B cell (primary cell): ENCODE measurements at regions of chr12 and their contacts with region 1.

Region 1: DNA sequence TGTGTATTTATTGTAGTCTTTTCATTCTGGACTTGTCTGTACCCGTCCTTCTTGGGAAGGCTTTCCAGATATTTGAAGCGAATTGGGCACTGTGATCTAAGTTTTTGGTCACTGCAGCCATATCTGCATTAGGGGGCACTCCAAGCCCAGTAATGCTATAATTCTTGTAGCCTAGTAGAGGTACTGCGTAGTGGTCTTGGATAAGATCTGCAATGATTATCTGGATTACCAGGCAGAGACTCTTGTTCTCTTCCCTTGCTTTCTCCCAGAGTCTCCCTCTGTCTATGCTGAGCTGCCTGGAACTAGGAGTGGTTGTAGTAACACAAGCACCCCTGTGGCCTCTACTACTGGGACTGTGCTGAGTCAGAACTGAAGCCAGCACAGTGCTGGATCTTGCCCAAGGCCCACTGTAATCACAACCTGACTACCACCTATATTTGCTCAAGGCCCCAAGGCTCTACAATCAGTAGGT is 30.0 kb downstream of the SLC38A2 start:
- DNase-seq: peak; percentile 65
- ATAC-seq: no peak
- H3K4me3 ChIP-seq: no peak overlapping the region
- H3K4me3 Mint-ChIP-seq: no peak overlapping the region
- H3K27ac ChIP-seq: no peak overlapping the region
- H3K27ac Mint-ChIP-seq: no peak overlapping the region
- H3K4me1 ChIP-seq: no peaks in the 10 kb centered on the region
- H3K4me1 Mint-ChIP-seq: no peaks in the 10 kb centered on the region
- H3K27me3 ChIP-seq: no peaks in the 10 kb centered on the region
- H3K27me3 Mint-ChIP-seq: peaks cover 8% of the 10 kb centered on the region
- CTCF ChIP-seq: peak; percentile 66

Region 2: GRCh38 chr12:46354111-46354798 is 11.7 kb after region 1 on chr12:
- CTCF ChIA-PET with region 1: no interaction called
- POLR2A ChIA-PET with region 1: no interaction called
- intact Hi-C with region 1: no loop called
- DNase-seq: no peak
- ATAC-seq: peak; percentile 43
- H3K4me3 ChIP-seq: no peak overlapping the region
- H3K4me3 Mint-ChIP-seq: no peak overlapping the region
- H3K27ac ChIP-seq: no peak overlapping the region
- H3K27ac Mint-ChIP-seq: no peak overlapping the region
- H3K4me1 ChIP-seq: no peaks in the 10 kb centered on the region
- H3K4me1 Mint-ChIP-seq: peaks cover 3% of the 10 kb centered on the region
- H3K27me3 ChIP-seq: peaks cover 0 to 4% (median 0%) of the 10 kb centered on the region in 4 experiments
- H3K27me3 Mint-ChIP-seq: no peaks in the 10 kb centered on the region
- CTCF ChIP-seq: no peak

Region 3: GRCh38 chr12:46391630-46392029 is 49.0 kb after region 1 on chr12:
- CTCF ChIA-PET with region 1: no interaction called
- POLR2A ChIA-PET with region 1: no interaction called
- intact Hi-C with region 1: no loop called
- DNase-seq: no peak
- ATAC-seq: no peak
- H3K4me3 ChIP-seq: no peak overlapping the region
- H3K4me3 Mint-ChIP-seq: no peak overlapping the region
- H3K27ac ChIP-seq: no peak overlapping the region
- H3K27ac Mint-ChIP-seq: no peak overlapping the region
- H3K4me1 ChIP-seq: peaks cover 42 to 43% of the 10 kb centered on the region in 2 donors
- H3K4me1 Mint-ChIP-seq: peaks cover 50% of the 10 kb centered on the region
- H3K27me3 ChIP-seq: no peaks in the 10 kb centered on the region
- H3K27me3 Mint-ChIP-seq: no peaks in the 10 kb centered on the region
- CTCF ChIP-seq: no peak

Region 4: DNA sequence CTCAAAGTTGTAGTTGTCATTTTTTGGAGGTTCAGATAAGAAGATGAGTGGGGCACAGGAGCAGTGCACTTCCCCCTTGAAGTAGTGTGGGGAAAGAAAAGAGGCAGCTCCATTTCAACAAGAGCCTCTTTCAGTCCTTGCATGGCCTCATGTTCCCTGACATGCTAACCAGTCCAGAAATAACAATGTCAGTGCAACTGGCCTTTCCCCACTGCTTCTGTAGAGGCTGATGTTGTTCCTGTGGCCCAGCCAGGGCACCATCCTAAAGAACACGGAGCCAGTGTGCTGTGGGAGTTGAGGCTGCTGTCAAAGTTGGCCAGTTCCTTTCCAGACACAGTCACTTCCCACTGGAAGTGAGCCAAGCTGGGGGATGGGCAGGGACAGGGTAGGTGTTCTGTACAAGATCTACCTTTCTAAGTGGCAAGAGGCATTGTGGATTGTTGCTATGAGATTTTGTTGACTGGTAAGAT is 107.7 kb after region 1 on chr12:
- CTCF ChIA-PET with region 1: no interaction called
- POLR2A ChIA-PET with region 1: no interaction called
- intact Hi-C with region 1: no loop called
- DNase-seq: no peak
- ATAC-seq: no peak
- H3K4me3 ChIP-seq: no peak overlapping the region
- H3K4me3 Mint-ChIP-seq: no peak overlapping the region
- H3K27ac ChIP-seq: no peak overlapping the region
- H3K27ac Mint-ChIP-seq: no peak overlapping the region
- H3K4me1 ChIP-seq: peaks cover 6 to 14% of the 10 kb centered on the region in 2 donors
- H3K4me1 Mint-ChIP-seq: peaks cover 15% of the 10 kb centered on the region
- H3K27me3 ChIP-seq: no peaks in the 10 kb centered on the region
- H3K27me3 Mint-ChIP-seq: no peaks in the 10 kb centered on the region
- CTCF ChIP-seq: no peak

Region 5: DNA sequence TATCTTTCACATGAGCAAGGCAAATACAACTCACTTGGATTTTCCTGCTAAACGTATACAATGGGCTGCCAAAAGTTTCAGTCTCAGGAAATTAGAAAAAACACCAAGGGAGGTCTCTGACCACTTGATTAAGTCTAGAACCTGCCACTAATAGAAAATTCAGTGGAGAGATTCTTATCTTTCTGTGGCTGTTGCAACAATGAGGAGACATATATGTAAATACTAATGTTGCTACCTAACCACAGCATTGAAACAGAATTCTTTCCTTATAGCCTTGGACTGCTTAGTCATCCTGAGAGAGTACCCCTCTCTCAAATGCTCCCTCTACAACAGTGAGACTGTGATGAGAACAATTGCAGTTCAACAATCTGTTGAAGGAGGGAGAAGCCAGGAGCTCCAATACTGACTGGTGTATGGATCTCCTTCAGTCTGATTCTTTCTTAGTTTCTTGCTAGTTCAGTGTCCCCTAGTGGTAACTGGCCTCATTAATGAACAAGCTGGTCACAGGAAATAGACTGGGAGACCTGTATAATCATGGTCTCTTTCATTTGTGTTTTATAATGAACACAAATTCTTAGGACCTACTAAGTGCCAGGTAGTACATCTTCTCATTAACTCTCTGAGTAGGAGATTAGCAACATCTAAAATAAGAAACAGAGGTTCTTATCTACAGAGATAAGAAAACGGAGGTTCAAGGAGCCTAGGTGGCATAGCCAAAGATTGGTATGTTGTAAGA is 318.7 kb after region 1 on chr12:
- CTCF ChIA-PET with region 1: interaction called, 20 read pairs
- POLR2A ChIA-PET with region 1: no interaction called
- intact Hi-C with region 1: loop called (anchors 1 kb)
- DNase-seq: peak; percentile 70
- ATAC-seq: peak; percentile 88
- H3K4me3 ChIP-seq: peak overlapping the region in 3 of 5 experiments; percentile 1 to 16 (median 7)
- H3K4me3 Mint-ChIP-seq: peak overlapping the region; percentile 29
- H3K27ac ChIP-seq: no peak overlapping the region
- H3K27ac Mint-ChIP-seq: peak overlapping the region; percentile 64
- H3K4me1 ChIP-seq: peaks cover 21 to 27% of the 10 kb centered on the region in 2 donors
- H3K4me1 Mint-ChIP-seq: peaks cover 28% of the 10 kb centered on the region
- H3K27me3 ChIP-seq: no peaks in the 10 kb centered on the region
- H3K27me3 Mint-ChIP-seq: no peaks in the 10 kb centered on the region
- CTCF ChIP-seq: peak; percentile 70

Region 6: DNA sequence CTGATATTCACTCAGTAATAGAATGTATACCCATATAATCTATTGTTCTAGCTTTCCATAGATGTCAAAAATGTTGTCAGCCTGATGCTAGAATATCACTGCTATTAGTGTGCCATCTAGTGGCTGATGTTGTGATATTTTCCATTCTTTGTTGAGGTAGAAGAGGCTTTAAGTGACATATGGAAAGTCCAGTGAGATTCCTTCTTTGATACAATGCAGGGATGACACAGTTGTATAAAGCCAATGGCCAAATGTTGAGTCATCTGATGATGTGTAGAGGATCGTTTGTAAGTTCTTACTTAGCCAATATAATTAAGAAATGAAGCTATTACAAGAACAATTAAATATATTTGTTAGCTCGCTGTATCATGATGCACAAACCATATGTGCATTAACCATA is 678.7 kb after region 1 on chr12:
- CTCF ChIA-PET with region 1: interaction called, 44 read pairs
- POLR2A ChIA-PET with region 1: no interaction called
- intact Hi-C with region 1: no loop called
- DNase-seq: peak; percentile 70
- ATAC-seq: peak; percentile 28
- H3K4me3 ChIP-seq: no peak overlapping the region
- H3K4me3 Mint-ChIP-seq: no peak overlapping the region
- H3K27ac ChIP-seq: no peak overlapping the region
- H3K27ac Mint-ChIP-seq: no peak overlapping the region
- H3K4me1 ChIP-seq: no peaks in the 10 kb centered on the region
- H3K4me1 Mint-ChIP-seq: no peaks in the 10 kb centered on the region
- H3K27me3 ChIP-seq: peaks cover 0 to 3% (median under 1%) of the 10 kb centered on the region in 4 experiments
- H3K27me3 Mint-ChIP-seq: peaks cover 9% of the 10 kb centered on the region
- CTCF ChIP-seq: peak; percentile 88

Region 7: DNA sequence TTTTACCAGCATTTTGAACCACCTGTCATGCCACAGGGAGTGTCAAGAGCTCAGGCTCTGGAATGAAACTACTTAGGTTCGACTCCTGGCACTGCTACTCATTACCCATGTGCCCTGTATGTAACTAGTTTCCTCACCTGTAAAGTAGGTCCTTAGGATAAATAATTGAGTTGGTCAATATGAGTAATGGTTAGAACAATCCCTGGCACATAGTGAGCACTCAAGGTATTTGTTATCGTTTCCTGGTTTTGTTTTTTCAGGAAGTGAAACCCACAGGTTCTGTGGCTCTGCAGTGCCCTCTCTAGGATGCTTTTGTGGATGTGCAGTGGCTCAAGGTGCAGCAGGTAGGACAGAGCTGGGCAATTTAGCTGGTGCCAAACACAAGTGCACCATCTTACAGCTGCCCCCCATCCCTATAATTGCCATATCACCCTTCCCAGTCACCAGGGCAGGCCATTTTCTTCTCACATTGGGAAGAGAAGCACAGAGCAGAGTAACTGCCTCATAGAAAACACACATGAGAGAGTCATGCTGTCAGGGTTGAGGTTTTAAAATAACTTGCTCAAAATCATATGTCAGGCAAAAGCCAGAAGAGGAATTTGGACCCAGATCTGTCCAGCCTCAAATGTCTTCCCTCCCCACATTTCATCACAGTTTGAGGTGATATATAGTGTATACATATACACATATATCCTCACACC is 1065.7 kb after region 1 on chr12:
- CTCF ChIA-PET with region 1: no interaction called
- POLR2A ChIA-PET with region 1: no interaction called
- intact Hi-C with region 1: loop called (anchors 1 kb)
- DNase-seq: peak; percentile 87
- ATAC-seq: peak; percentile 98
- H3K4me3 ChIP-seq: no peak overlapping the region
- H3K4me3 Mint-ChIP-seq: no peak overlapping the region
- H3K27ac ChIP-seq: peak overlapping the region; percentile 41 to 55
- H3K27ac Mint-ChIP-seq: peak overlapping the region; percentile 73
- H3K4me1 ChIP-seq: peaks cover 18 to 19% of the 10 kb centered on the region in 2 donors
- H3K4me1 Mint-ChIP-seq: peaks cover 21% of the 10 kb centered on the region
- H3K27me3 ChIP-seq: no peaks in the 10 kb centered on the region
- H3K27me3 Mint-ChIP-seq: no peaks in the 10 kb centered on the region
- CTCF ChIP-seq: peak; percentile 83